ENCODE measurements at regions of chr1 and their contacts with region 1.

Region 1: GRCh38 chr1:86913896-86914634 is at the start of gene SELENOF:
- DNase-seq: peak; percentile 99 to 100 (median 99)
- ATAC-seq: peak; percentile 96 to 99 (median 98)
- H3K4me3 ChIP-seq: peak within 1 kb of the TSS; percentile 60 to 95 (median 86)
- H3K27ac ChIP-seq: peak within 1 kb of the TSS; percentile 88 to 98 (median 96)
- H3K4me1 ChIP-seq: peaks cover 3 to 38% (median 26%) of the 10 kb centered on the region in 12 donors
- H3K27me3 ChIP-seq: no peaks in the 10 kb centered on the region
- CTCF ChIP-seq: no peak
- POLR2A ChIP-seq: peak; percentile 30 to 70
- total RNA-seq, gene SELENOF: 46.8 to 125 (median 76.1) TPM

Region 2: DNA sequence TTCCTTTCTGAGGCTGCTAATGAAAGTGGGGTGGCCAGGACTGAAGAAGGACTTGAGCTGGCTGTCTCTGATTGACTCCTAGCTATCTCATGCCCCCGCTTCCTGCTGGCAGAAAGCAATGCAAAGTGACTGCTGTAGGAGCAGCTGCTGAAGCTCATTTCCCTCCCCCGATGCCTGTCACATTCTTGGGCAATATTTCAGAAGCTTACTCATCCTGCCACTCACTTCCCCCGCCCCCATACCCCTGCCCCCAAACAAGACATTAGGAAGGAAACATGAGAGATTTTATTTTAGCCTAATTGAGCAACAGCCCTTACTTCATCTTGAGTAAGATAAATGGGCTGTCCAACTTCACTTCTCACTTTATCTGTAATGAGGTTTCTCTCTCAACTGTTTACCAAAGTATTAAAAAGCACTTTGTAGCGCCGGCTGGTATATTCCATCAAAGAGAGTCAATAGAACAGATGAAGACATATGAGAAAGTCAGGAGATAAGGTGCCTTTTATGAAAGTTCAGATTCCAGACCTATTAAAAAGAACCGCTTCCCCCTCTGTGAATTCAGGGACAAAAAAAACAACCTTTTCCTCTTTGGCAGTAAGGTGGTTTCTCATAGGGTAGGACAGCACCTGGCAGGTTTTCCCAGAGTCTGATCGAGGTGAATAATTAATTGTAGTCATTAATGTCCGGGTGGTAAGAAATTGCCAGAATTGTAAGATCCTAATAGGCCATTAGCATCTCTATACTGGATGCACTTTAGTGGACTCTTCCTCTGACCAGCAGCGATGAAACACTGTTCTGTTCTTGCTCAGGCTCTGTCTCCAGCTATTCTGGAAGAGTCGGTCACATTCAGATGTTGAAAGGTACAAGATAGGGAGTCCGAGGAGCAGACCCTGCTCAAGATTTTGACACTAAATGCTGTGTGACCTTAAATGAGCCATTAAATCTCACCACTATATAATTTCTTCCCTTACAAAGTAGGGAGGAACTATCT is 139.5 kb before region 1 on chr1:
- intact Hi-C with region 1: loop called in 1 of 10 experiments (anchors 1 kb)
- DNase-seq: peak; percentile 71 to 85 (median 74)
- ATAC-seq: peak; percentile 79 to 95 (median 94)
- H3K4me3 ChIP-seq: peak overlapping the region in 2 of 12 donors; percentile 11 to 18
- H3K27ac ChIP-seq: peak overlapping the region; percentile 17 to 79 (median 44)
- H3K4me1 ChIP-seq: peaks cover 0 to 42% (median 20%) of the 10 kb centered on the region in 12 donors
- H3K27me3 ChIP-seq: no peaks in the 10 kb centered on the region
- CTCF ChIP-seq: no peak
- POLR2A ChIP-seq: no peak

Region 3: GRCh38 chr1:86866665-86867064 is 47.4 kb before region 1 on chr1:
- intact Hi-C with region 1: loop called in 1 of 10 experiments (anchors 10 kb)
- DNase-seq: no peak
- ATAC-seq: no peak
- H3K4me3 ChIP-seq: no peak overlapping the region
- H3K27ac ChIP-seq: no peak overlapping the region
- H3K4me1 ChIP-seq: peaks cover 0 to 17% (median 0%) of the 10 kb centered on the region in 12 donors
- H3K27me3 ChIP-seq: no peaks in the 10 kb centered on the region
- CTCF ChIP-seq: no peak
- POLR2A ChIP-seq: no peak

Region 4: GRCh38 chr1:86950712-86951419 is 36.8 kb after region 1 on chr1:
- intact Hi-C with region 1: loop called in 1 of 10 experiments (anchors 5 kb)
- DNase-seq: no peak
- ATAC-seq: no peak
- H3K4me3 ChIP-seq: no peak overlapping the region
- H3K27ac ChIP-seq: no peak overlapping the region
- H3K4me1 ChIP-seq: peaks cover 0 to 16% (median 1%) of the 10 kb centered on the region in 12 donors
- H3K27me3 ChIP-seq: no peaks in the 10 kb centered on the region
- CTCF ChIP-seq: no peak
- POLR2A ChIP-seq: no peak

Region 5: GRCh38 chr1:87335175-87335884 is 421.3 kb after region 1 on chr1:
- intact Hi-C with region 1: loop called in 1 of 10 experiments (anchors 10 kb)
- DNase-seq: peak; percentile 75 to 90 (median 83)
- ATAC-seq: peak; percentile 17 to 80 (median 76)
- H3K4me3 ChIP-seq: peak overlapping the region; percentile 40 to 88 (median 74)
- H3K27ac ChIP-seq: peak overlapping the region; percentile 20 to 88 (median 80)
- H3K4me1 ChIP-seq: peaks cover 3 to 65% (median 37%) of the 10 kb centered on the region in 12 donors
- H3K27me3 ChIP-seq: no peaks in the 10 kb centered on the region
- CTCF ChIP-seq: peak in 10 of 12 donors; percentile 13 to 65 (median 46)
- POLR2A ChIP-seq: no peak